ENCODE measurements at regions of chr11 and their contacts with region 1.

Region 1: DNA sequence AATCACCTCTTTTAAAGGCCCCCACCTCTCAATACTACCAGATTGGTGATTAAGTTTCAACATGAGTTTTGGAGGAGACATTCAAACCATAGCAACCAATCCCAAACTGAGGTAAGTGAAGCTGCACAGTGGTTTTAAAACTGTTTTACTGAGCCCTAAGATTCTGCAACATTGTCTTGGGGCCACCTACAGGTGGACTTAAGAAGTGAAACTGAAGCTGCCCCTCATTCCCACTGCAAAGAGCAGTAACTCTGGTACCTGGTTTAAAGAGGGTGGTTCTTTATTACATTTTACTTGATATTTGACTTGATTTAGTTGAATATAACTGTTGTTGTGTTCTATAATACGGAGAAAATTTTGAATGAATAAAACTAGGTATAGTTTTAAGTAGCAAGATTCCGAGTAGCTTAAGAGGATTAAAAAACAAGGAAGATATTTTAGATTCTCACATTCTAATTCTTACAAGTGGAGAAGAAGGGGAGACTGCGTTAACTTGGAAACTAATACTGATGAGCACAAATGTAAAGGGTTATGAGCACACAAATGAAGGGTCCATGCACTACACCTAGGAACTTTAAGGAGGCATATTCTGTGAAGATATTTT is 26.7 kb downstream of the SYT9 start:
- DNase-seq: no peak
- H3K4me3 ChIP-seq: no peak overlapping the region
- H3K27ac ChIP-seq: no peak overlapping the region
- H3K4me1 ChIP-seq: no peaks in the 10 kb centered on the region
- H3K27me3 ChIP-seq: no peaks in the 10 kb centered on the region
- CTCF ChIP-seq: peak in 2 of 3 experiments; percentile 59 to 70; a peak in 3 of 4 replicates
- EP300 ChIP-seq: no peak
- POLR2A ChIP-seq: no peak
- RAD21 ChIP-seq: peak; percentile 70 to 78

Region 2: DNA sequence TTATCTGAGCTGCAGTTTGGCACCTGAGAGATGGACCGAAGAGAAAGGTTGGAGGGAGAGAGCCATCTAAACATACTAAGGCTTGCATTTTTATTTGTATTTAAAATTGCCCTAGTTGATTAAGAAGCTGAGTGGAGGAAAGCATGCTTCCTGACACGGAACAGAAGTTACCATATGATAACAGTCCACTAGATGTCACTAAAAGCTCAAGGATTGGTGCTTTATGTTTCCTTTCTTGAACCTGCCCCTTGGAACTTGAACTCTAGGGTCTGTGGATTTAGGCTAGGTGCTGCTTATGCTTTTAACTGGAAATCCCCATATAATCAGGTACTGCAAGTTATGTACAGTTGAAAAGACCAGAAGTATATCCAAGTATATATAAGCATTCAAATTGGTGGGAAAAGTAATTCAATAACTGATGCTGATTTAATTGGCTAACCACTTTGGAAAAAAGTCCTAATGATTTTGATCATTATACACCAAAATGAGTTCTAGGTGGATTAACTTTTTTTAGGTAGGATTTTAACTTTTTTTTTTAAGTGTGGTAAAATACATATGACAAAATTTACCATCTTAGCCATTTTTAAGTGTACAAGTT is 180.1 kb before region 1 on chr11:
- CTCF ChIA-PET with region 1: interaction called, 17 read pairs
- POLR2A ChIA-PET with region 1: no interaction called
- DNase-seq: no peak
- H3K4me3 ChIP-seq: no peak overlapping the region
- H3K27ac ChIP-seq: no peak overlapping the region
- H3K4me1 ChIP-seq: no peaks in the 10 kb centered on the region
- H3K27me3 ChIP-seq: no peaks in the 10 kb centered on the region
- CTCF ChIP-seq: peak in 2 of 3 experiments; percentile 69 to 71; a peak in 3 of 4 replicates
- EP300 ChIP-seq: no peak
- POLR2A ChIP-seq: no peak
- RAD21 ChIP-seq: peak; percentile 94 to 97

Region 3: GRCh38 chr11:7143908-7144307 is 134.5 kb before region 1 on chr11:
- CTCF ChIA-PET with region 1: interaction called, 43 read pairs
- POLR2A ChIA-PET with region 1: no interaction called
- DNase-seq: no peak
- H3K4me3 ChIP-seq: no peak overlapping the region
- H3K27ac ChIP-seq: no peak overlapping the region
- H3K4me1 ChIP-seq: no peaks in the 10 kb centered on the region
- H3K27me3 ChIP-seq: no peaks in the 10 kb centered on the region
- CTCF ChIP-seq: peak in 2 of 3 experiments; percentile 28 to 38; a peak in 2 of 4 replicates
- EP300 ChIP-seq: no peak
- POLR2A ChIP-seq: no peak
- RAD21 ChIP-seq: peak; percentile 65 to 78

Region 4: GRCh38 chr11:7261578-7261977 is 16.8 kb before region 1 on chr11:
- CTCF ChIA-PET with region 1: interaction called, 11 read pairs
- POLR2A ChIA-PET with region 1: no interaction called
- DNase-seq: no peak
- H3K4me3 ChIP-seq: no peak overlapping the region
- H3K27ac ChIP-seq: no peak overlapping the region
- H3K4me1 ChIP-seq: no peaks in the 10 kb centered on the region
- H3K27me3 ChIP-seq: no peaks in the 10 kb centered on the region
- CTCF ChIP-seq: no peak
- EP300 ChIP-seq: no peak
- POLR2A ChIP-seq: no peak
- RAD21 ChIP-seq: no peak

Region 5: DNA sequence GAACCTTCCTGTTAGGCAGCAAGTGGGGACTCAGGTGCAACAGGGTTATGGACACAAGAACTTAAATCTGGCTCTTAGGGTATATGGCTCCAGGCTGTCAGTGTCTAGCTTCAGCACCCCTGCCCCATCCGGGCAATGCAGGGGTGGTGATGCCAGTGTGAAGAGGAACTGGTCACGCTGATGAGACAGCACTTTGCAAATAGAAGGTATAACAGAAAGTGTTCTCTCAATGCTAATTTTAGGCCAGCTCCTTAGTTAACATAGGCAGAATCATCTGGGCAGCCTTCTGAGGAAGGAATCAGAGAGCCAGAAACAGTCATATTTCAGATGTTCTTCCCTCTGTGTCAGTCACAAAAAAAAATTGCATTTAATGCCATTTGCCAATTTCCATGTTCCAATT is 14.5 kb after region 1 on chr11:
- CTCF ChIA-PET with region 1: interaction called, 48 read pairs
- POLR2A ChIA-PET with region 1: no interaction called
- DNase-seq: no peak
- H3K4me3 ChIP-seq: no peak overlapping the region
- H3K27ac ChIP-seq: no peak overlapping the region
- H3K4me1 ChIP-seq: no peaks in the 10 kb centered on the region
- H3K27me3 ChIP-seq: no peaks in the 10 kb centered on the region
- CTCF ChIP-seq: no peak
- EP300 ChIP-seq: no peak
- POLR2A ChIP-seq: no peak
- RAD21 ChIP-seq: no peak

Region 6: DNA sequence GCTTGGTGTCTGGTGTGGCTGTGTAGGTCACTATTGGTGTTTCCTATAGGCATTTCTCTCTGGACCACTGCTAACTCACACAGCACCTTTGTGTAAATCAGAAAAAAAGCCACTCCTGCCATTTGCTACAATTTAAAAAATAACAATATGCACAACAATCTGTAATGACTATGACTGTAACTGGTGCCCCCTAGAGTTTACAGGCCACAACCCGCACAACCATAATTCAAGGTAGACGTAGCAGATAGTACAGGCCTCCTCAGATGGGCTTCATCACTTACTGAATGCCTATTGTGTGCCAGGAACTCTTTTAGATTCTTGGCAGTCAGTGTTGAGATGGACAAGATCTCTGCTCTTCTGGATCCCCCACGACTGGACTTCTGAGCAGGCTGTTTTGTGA is 21.0 kb after region 1 on chr11:
- CTCF ChIA-PET with region 1: interaction called, 48 read pairs
- POLR2A ChIA-PET with region 1: no interaction called
- DNase-seq: no peak
- H3K4me3 ChIP-seq: no peak overlapping the region
- H3K27ac ChIP-seq: no peak overlapping the region
- H3K4me1 ChIP-seq: no peaks in the 10 kb centered on the region
- H3K27me3 ChIP-seq: no peaks in the 10 kb centered on the region
- CTCF ChIP-seq: peak in 1 of 3 experiments; percentile 14; a peak in 1 of 4 replicates
- EP300 ChIP-seq: no peak
- POLR2A ChIP-seq: no peak
- RAD21 ChIP-seq: no peak